Adrenal gland (tissue), 19 donors: ENCODE measurements at regions of chr22 and their contacts with region 1.

Region 1: DNA sequence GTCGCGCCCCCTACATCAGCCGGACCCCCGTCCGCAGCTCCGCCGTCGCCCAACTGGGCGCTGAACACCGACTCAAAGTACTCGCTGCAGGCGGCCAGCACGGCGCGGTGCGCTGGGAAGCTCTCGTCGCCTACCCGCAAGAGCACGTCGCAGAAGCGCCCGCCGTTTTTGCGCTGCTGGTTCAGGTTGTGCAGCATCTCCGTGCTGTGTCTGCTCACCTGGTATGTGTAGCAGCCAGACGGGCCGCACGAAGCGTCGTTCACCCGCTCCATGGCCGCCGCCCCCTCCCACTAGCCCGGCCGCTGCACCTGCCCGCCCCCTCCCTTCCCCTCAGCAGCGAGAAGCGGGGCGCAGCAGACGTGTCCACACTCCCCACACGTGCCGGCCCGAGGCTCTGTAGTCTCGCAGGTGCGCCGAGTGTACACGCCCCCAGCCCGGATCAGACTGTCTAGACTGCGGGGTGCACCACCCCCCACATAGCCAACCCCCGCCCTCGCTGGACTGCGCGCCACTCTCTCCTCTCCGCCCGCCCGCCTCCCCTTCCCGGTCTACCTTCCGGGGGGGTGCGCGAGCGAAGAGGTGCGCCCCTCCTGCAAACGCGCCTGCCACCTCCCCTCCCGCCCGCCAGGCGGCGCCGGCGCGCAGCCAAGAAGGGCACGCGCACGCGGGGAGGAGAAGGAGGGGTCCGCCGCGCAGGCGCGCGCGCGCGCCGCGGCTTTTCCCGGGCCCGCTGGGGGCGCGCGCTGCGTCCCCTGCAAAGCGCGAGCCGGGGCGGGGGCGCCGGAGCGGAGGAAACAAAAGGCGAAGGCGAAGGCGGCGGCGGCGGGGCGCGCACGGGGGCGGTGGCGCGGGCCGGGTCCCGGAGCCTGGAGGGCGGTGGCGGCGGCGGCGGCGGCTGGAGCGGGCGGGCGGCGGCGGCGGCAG is 553 bp downstream of the PATZ1 start:
- DNase-seq: peak; percentile 77 to 86 (median 81)
- H3K4me3 ChIP-seq: peak overlapping the region in 2 of 4 donors; percentile 51 to 89
- H3K27ac ChIP-seq: peak overlapping the region in 3 of 5 donors; percentile 88 to 99 (median 89)
- H3K4me1 ChIP-seq: peaks cover 32 to 36% of the 10 kb centered on the region in 2 donors
- H3K27me3 ChIP-seq: no peaks in the 10 kb centered on the region
- CTCF ChIP-seq: peak; percentile 51 to 97 (median 80)
- POLR2A ChIP-seq: peak; percentile 50 to 55

Region 2: GRCh38 chr22:31211862-31212730 is 133.5 kb before region 1 on chr22 and contains the start of gene LIMK2:
- intact Hi-C with region 1: no loop called
- DNase-seq: peak; percentile 90 to 97 (median 95)
- H3K4me3 ChIP-seq: peak within 1 kb of the TSS in 3 of 4 donors; percentile 57 to 81 (median 67)
- H3K27ac ChIP-seq: peak within 1 kb of the TSS; percentile 28 to 87 (median 66)
- H3K4me1 ChIP-seq: peaks cover 6 to 31% of the 10 kb centered on the region in 2 donors
- H3K27me3 ChIP-seq: no peaks in the 10 kb centered on the region
- CTCF ChIP-seq: peak; percentile 37 to 80 (median 67)
- POLR2A ChIP-seq: peak; percentile 14 to 42
- total RNA-seq, gene LIMK2: 16.9 to 36.1 (median 24.3) TPM

Region 3: DNA sequence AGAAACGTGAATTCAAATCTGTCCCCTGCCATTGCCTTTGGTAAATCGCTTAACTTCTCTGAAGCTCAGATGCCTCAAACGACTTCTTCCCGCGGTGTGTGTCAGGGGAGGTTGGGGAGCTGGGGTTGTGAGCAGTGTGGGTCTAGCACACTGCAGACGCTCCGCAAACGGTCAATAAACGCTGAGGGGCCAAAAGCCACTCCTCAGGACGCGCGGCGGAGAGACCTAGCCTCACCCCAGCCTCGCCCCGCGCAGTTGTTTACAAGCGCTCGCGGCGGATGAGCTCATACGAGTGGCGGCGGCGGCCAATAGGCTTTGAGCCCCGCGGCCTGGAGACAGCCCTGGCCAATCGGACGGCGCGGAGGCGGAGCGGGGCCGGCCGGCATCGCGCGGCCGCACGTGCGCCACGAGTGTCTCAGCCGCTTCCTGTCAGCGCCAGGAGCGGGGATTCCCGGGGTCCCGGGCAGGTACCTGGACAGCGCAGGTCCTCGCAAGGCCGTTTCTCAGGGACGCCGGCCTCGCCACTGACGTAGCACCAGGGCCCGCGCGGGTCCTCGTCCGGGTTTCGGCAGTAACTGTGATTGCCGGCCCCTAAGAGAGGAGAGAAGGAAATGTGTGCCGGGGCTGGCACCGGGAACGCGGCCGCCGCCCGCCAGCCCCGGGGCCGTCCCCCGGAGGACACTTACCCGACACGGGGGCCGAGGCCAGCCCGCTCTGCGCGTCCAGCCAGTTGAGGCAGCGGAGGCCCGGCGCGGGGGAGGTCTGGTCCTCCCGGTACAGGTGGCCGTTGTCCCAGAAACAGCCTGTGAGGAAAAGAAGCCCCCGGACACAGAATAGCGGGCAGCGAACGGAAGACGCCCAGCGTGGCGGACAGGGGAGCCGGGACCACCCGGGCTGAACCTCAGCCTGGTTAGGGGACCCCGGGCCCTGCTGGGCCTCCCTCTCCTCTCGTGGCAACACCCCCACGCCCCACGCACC is 54.8 kb before region 1 on chr22:
- intact Hi-C with region 1: no loop called
- DNase-seq: peak; percentile 92 to 98 (median 96)
- H3K4me3 ChIP-seq: peak overlapping the region in 3 of 4 donors; percentile 36 to 79 (median 70)
- H3K27ac ChIP-seq: peak overlapping the region; percentile 86 to 96 (median 96)
- H3K4me1 ChIP-seq: peaks cover 56 to 73% of the 10 kb centered on the region in 2 donors
- H3K27me3 ChIP-seq: no peaks in the 10 kb centered on the region
- CTCF ChIP-seq: no peak
- POLR2A ChIP-seq: peak; percentile 70 to 98

Region 4: DNA sequence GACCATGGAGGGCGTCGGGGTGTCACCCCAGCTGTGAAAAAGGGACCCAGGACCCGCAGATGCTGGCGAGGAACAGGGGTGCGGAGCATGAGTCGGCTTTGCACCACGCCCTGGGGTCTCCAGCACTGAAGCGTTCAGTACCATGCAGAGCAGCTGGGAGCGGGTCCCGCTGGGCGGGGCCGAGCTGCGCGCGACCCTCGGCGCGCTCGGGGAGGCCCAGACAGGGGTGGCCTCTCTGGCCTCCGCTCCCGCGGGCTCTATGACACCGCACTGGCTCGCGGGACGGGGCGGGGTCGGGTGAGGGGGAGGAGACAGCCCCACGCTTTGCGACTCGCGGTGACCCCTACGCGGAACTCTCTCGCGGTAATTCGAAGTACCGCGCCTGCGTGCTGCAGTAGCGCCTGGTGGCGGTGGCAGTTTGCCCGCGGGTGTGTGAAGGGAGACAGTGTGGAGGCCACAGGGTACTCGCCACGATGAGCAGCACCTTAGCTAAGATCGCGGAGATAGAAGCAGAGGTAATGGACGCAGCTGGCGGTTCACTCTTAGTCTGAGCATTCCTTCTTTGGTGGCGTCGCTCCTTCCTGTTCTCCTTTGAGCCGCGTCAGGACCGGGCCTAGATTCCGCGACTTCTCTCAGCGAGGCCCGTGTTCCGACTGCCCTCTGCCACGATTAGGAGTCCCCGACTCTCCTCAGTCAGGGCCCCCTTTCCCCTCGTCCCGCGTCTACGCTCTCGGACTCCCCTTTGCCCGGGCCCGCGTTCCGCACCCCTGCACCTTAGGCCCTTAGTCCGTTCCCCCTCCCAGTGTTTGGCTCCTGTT is 53.8 kb after region 1 on chr22 and contains the start of gene DRG1:
- intact Hi-C with region 1: loop called in 1 of 2 experiments (anchors 5 kb)
- DNase-seq: peak; percentile 97 to 98 (median 98)
- H3K4me3 ChIP-seq: peak within 1 kb of the TSS; percentile 1 to 80 (median 60)
- H3K27ac ChIP-seq: peak within 1 kb of the TSS; percentile 55 to 91 (median 80)
- H3K4me1 ChIP-seq: peaks cover 10 to 26% of the 10 kb centered on the region in 2 donors
- H3K27me3 ChIP-seq: no peaks in the 10 kb centered on the region
- CTCF ChIP-seq: peak in 3 of 6 experiments; percentile 2 to 31 (median 30)
- POLR2A ChIP-seq: peak; percentile 91 to 92
- total RNA-seq, gene DRG1: 47.2 to 84.6 (median 64.0) TPM

Region 5: DNA sequence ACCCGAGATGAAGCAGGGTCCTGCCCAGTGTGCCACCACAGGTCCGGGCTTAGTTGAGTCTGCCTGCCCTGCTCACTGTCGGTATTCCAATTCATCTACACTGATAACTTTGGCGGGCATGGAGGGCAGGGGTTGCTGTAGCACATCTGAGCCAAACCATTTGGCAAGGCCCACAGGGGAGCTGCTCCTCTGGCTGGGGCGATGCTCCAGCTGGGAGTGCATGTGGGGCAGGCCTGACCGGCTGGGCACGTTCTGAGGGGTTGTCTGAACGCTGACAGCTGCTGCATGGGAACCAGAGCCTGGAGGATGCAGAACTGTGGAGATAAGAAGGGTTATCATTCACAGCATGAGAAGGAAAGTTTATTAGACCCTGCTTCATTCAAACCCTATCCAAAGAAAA is 94.2 kb after region 1 on chr22:
- intact Hi-C with region 1: no loop called
- DNase-seq: peak in 1 of 7 donors; percentile 50
- H3K4me3 ChIP-seq: no peak overlapping the region
- H3K27ac ChIP-seq: no peak overlapping the region
- H3K4me1 ChIP-seq: peaks cover 8 to 33% of the 10 kb centered on the region in 2 donors
- H3K27me3 ChIP-seq: no peaks in the 10 kb centered on the region
- CTCF ChIP-seq: no peak
- POLR2A ChIP-seq: no peak